WTC11 (cell line): ENCODE measurements at regions of chr12 and their contacts with region 1.

Region 1: DNA sequence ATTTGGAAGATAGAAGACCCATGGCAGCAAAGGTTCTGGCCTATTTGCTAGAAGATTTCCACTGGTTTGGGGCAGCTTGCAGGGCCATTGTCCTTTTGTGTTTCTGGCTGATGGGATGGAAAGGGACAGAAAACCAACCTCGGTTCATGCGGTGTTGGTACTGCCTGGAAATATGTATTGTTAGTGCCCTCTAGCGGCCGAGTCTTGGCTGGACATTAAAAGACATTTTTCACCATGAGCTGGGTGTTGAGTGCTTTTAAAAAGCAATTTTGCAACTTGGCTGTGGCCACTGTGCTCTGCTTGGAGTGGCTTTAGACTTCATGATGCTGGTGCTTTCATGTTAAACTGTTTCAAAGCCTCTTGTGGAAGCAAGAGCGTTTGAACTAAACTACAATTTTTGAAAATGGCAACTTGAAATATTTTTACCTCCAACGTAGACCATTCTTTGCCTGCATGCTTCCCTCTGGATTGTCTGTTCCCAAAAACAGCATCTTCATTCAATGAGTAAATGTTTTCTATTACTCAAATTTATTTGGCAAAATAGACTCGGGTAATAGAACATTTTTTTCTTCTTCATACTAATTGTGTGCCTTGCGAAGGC is 102.7 kb upstream of the TBX5 start:
- DNase-seq: peak; percentile 80
- ATAC-seq: peak; percentile 81
- H3K4me3 Mint-ChIP-seq: no peak overlapping the region
- H3K27ac Mint-ChIP-seq: no peak overlapping the region
- H3K4me1 Mint-ChIP-seq: no peaks in the 10 kb centered on the region
- H3K27me3 Mint-ChIP-seq: peaks cover 23% of the 10 kb centered on the region
- CTCF ChIP-seq: peak; percentile 68

Region 2: GRCh38 chr12:113996026-113996425 is 512.6 kb before region 1 on chr12:
- CTCF ChIA-PET with region 1: interaction called, 11 read pairs
- POLR2A ChIA-PET with region 1: interaction called, 6 read pairs
- DNase-seq: peak; percentile 62
- ATAC-seq: peak; percentile 100
- H3K4me3 Mint-ChIP-seq: no peak overlapping the region
- H3K27ac Mint-ChIP-seq: no peak overlapping the region
- H3K4me1 Mint-ChIP-seq: peaks cover 5% of the 10 kb centered on the region; the same call in 1 of the 2 replicates
- H3K27me3 Mint-ChIP-seq: peaks cover 18% of the 10 kb centered on the region
- CTCF ChIP-seq: no peak

Region 3: GRCh38 chr12:114355389-114356088 is 153.1 kb before region 1 on chr12:
- CTCF ChIA-PET with region 1: interaction called, 10 read pairs
- POLR2A ChIA-PET with region 1: no interaction called
- DNase-seq: peak; percentile 80
- ATAC-seq: peak; percentile 98
- H3K4me3 Mint-ChIP-seq: no peak overlapping the region
- H3K27ac Mint-ChIP-seq: no peak overlapping the region
- H3K4me1 Mint-ChIP-seq: peaks cover 14% of the 10 kb centered on the region
- H3K27me3 Mint-ChIP-seq: no peaks in the 10 kb centered on the region
- CTCF ChIP-seq: peak; percentile 42; the same call in 1 of the 2 replicates

Region 4: DNA sequence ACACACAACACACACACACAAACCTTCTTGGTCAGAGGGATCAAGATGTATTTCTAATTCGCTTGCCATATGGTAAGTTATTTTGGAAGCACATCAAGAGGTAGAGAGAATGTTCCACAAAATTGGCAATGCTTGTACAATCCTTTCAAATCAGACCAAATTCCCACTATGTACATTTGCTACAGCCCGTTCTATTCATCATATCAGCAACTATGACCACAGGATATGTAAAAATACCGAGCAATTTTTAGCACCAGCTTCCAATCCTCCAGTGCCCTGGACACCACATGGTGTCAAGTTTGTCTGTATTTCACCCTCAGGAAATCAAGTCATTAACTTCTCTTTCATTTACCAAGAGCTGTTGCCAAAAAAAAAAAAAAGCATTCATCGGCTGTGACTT is 123.9 kb before region 1 on chr12:
- CTCF ChIA-PET with region 1: no interaction called
- POLR2A ChIA-PET with region 1: no interaction called
- DNase-seq: no peak
- ATAC-seq: no peak
- H3K4me3 Mint-ChIP-seq: no peak overlapping the region
- H3K27ac Mint-ChIP-seq: no peak overlapping the region
- H3K4me1 Mint-ChIP-seq: peaks cover 14% of the 10 kb centered on the region
- H3K27me3 Mint-ChIP-seq: peaks cover 4% of the 10 kb centered on the region; the same call in 1 of the 2 replicates
- CTCF ChIP-seq: no peak

Region 5: DNA sequence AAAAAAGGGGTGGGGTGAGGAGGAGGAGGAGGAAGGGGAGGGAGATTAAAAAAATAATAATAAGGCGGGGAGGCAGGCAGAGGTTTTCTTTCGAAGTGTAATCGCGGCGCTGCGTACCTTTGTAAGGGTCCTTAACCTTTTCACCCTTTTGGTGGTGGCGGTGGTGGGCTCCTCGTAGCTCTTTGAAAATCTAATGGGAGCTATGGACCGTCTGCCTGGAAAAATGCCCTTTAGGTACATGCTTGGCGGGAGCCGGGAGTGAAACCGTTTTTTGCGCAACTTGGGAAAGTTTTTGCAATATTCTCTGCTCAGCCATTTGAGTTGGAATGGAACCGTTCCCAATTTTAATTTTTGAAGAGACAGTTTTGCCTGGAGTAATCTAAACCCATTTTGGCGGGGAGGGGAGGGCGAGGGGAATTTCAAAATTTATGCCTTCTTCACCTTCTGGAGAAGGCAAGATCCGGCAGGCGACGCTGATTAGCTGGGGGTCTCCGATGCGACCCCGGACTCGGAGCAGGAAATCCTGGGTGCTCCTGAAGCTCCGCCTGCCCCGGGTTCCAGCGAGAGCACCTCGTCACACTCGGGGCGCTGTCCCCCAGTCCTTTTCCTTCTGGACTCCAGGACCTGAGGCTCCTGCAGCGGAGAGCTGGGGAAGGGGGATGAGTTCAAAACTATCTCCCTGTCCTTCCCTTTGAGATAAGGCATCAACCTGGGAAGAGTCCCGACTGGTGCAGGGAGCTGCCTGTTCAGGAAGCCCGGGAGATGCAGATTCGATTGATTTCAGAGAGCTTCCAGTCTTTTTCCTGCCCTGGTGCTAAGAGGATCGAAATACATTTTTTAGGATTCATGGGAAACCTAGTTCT is 28.1 kb before region 1 on chr12:
- CTCF ChIA-PET with region 1: interaction called, 25 read pairs
- POLR2A ChIA-PET with region 1: interaction called, 4 read pairs
- DNase-seq: peak; percentile 14
- ATAC-seq: no peak
- H3K4me3 Mint-ChIP-seq: peak overlapping the region; percentile 82
- H3K27ac Mint-ChIP-seq: no peak overlapping the region
- H3K4me1 Mint-ChIP-seq: peaks cover 34% of the 10 kb centered on the region
- H3K27me3 Mint-ChIP-seq: peaks cover 83% of the 10 kb centered on the region
- CTCF ChIP-seq: no peak

Region 6: GRCh38 chr12:114528738-114529137 is 20.1 kb after region 1 on chr12:
- CTCF ChIA-PET with region 1: interaction called, 11 read pairs
- POLR2A ChIA-PET with region 1: no interaction called
- DNase-seq: no peak
- ATAC-seq: no peak
- H3K4me3 Mint-ChIP-seq: no peak overlapping the region
- H3K27ac Mint-ChIP-seq: no peak overlapping the region
- H3K4me1 Mint-ChIP-seq: no peaks in the 10 kb centered on the region
- H3K27me3 Mint-ChIP-seq: no peaks in the 10 kb centered on the region; the same call in 1 of the 2 replicates
- CTCF ChIP-seq: no peak

Region 7: GRCh38 chr12:114547636-114548035 is 39.0 kb after region 1 on chr12:
- CTCF ChIA-PET with region 1: no interaction called
- POLR2A ChIA-PET with region 1: no interaction called
- DNase-seq: no peak
- ATAC-seq: no peak; the same call in 1 of the 2 replicates
- H3K4me3 Mint-ChIP-seq: no peak overlapping the region
- H3K27ac Mint-ChIP-seq: no peak overlapping the region
- H3K4me1 Mint-ChIP-seq: peaks cover 15% of the 10 kb centered on the region
- H3K27me3 Mint-ChIP-seq: no peaks in the 10 kb centered on the region
- CTCF ChIP-seq: no peak